A549 (cell line): ENCODE measurements at regions of chr2 and their contacts with region 1.

Region 1: DNA sequence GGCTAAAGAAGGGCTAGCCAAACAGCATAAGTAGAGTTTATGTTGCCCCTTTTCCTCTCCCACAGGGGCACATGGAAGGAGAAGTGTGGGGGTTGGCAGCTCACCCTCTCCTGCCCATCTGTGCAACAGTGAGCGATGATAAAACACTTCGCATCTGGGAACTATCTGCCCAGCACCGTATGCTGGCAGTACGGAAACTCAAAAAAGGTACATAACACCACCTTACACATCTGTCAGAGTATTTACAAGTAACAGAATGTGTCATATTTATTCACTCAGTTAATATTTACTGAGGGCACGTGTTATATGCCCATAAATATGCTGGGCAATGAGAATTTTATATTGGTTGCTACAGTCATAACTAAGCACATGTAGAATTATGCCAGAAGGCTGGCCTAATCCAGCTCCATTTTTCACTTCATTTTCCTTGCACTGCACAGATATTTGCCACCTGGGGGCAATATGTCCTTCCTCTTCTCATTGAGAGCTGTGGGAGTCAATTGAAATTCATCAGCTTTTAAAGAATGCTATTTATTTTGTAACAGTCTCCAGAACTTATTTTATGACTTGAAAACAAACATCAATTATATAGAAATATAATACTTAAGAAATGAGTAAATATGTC is 150.6 kb downstream of the RTN4 start:
- DNase-seq: peak; percentile 35 to 58
- ATAC-seq: peak in 1 of 2 experiments; percentile 55; a peak in 3 of 6 replicates
- H3K4me3 ChIP-seq: no peak overlapping the region
- H3K27ac ChIP-seq: no peak overlapping the region
- H3K4me1 ChIP-seq: peaks cover 17% of the 10 kb centered on the region
- CTCF ChIP-seq: peak; percentile 75
- EP300 ChIP-seq: no peak
- POLR2A ChIP-seq: no peak
- RAD21 ChIP-seq: peak; percentile 90 to 93

Region 2: GRCh38 chr2:54927085-54927750 is 27.5 kb after region 1 on chr2:
- CTCF ChIA-PET with region 1: interaction called, 12 read pairs
- POLR2A ChIA-PET with region 1: no interaction called
- DNase-seq: no peak
- ATAC-seq: no peak
- H3K4me3 ChIP-seq: no peak overlapping the region
- H3K27ac ChIP-seq: no peak overlapping the region
- H3K4me1 ChIP-seq: peaks cover 7% of the 10 kb centered on the region; the same call in 2 of the 3 replicates
- CTCF ChIP-seq: no peak
- EP300 ChIP-seq: no peak
- POLR2A ChIP-seq: no peak
- RAD21 ChIP-seq: no peak

Region 3: DNA sequence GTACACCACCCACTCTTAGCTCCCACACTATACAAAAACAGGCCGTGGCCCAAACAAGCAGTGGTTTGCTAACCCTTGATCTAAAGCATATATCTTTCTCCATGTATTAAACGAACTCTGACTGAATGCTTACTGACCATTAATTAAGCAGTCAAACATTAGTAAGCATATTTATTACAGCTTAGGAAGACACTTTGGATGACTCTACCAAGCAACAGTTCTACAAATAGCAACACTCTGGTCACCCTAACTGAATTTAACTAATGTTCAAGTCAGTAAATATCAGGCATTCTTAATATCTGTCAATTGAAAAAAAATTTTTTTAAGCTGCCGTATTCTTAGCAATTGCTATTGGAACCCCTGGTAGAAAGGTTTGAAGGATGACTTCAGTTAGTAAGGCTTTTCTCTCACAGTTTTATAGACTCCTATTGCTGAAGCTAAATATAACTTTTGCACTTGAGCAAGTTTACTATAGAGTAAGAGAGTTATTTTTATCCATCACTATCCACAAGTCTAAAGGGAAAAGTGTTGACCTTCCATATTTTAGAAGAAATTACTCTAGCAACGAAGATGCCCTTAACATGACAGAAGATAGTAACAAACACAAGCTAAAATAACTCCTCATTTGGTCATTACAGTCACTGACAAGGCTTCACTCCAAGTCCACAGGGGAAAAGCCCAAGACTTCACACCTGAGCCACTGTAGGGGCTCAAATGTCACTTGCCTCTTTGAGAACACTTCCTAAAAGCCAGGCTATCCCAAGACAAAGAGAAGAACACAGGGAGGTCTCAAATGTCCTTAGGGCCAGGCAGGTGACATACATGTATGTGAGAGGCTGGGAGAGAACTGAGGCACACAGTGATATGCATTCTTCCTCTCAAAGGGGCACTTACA is 76.2 kb after region 1 on chr2:
- CTCF ChIA-PET with region 1: interaction called, 13 read pairs
- POLR2A ChIA-PET with region 1: no interaction called
- DNase-seq: no peak
- ATAC-seq: peak in 1 of 2 experiments; percentile 17; a peak in 1 of 6 replicates
- H3K4me3 ChIP-seq: no peak overlapping the region
- H3K27ac ChIP-seq: no peak overlapping the region
- H3K4me1 ChIP-seq: peaks cover 19% of the 10 kb centered on the region; the same call in 1 of the 3 replicates
- CTCF ChIP-seq: no peak
- EP300 ChIP-seq: no peak
- POLR2A ChIP-seq: no peak
- RAD21 ChIP-seq: no peak

Region 4: GRCh38 chr2:55010149-55010591 is 110.5 kb after region 1 on chr2:
- CTCF ChIA-PET with region 1: interaction called, 25 read pairs
- POLR2A ChIA-PET with region 1: no interaction called
- DNase-seq: peak; percentile 26 to 67
- ATAC-seq: peak; percentile 76 to 81
- H3K4me3 ChIP-seq: peak overlapping the region; percentile 15; the same call in 2 of the 3 replicates
- H3K27ac ChIP-seq: peak overlapping the region; percentile 1 to 68; a peak in 4 of 6 replicates
- H3K4me1 ChIP-seq: peaks cover 94% of the 10 kb centered on the region
- CTCF ChIP-seq: no peak
- EP300 ChIP-seq: no peak
- POLR2A ChIP-seq: no peak
- RAD21 ChIP-seq: no peak

Region 5: GRCh38 chr2:55014962-55015939 is 115.6 kb after region 1 on chr2:
- CTCF ChIA-PET with region 1: interaction called, 25 read pairs
- POLR2A ChIA-PET with region 1: no interaction called
- DNase-seq: peak; percentile 71 to 89
- ATAC-seq: peak; percentile 83 to 88
- H3K4me3 ChIP-seq: no peak overlapping the region
- H3K27ac ChIP-seq: peak overlapping the region; percentile 3 to 32; a peak in 2 of 6 replicates
- H3K4me1 ChIP-seq: peaks cover 86% of the 10 kb centered on the region
- CTCF ChIP-seq: peak; percentile 93
- EP300 ChIP-seq: no peak
- POLR2A ChIP-seq: no peak
- RAD21 ChIP-seq: peak; percentile 91 to 95

Region 6: DNA sequence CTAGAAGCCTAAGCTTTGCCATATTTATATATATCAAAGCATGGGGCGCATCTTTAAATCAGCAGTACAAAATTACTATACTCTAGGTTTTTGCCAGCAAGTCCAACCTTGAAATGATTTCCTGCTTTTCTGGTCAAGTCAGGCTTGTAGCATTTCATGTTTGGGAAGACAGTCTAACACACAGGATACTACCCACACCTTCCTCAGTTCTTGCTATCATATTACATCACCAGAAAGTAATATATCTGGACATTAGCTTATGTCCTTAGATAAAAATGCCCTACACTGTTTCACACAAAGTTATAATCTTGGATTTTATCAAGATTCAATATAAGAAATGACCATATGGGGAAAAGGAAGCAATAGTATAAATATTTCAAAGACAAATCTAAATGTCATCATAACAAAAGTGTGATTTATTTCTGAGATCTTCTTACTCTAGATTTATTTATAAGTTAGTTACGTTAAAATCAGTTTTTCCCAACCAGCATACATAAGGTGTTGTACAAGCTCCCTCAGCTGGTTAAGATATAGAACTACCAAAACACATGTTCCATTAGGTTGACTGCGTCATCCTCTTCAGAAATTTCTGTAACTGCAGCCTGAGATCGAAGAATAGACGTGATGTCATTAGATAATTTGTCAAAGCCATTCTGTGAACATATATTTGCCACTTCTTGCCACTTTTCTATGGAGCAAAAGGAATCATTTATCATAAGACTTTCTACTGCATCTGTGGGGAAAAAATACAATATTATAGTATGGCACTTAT is 275.8 kb after region 1 on chr2:
- CTCF ChIA-PET with region 1: interaction called, 236 read pairs
- POLR2A ChIA-PET with region 1: no interaction called
- DNase-seq: peak; percentile 75 to 87
- ATAC-seq: peak; percentile 90 to 95
- H3K4me3 ChIP-seq: no peak overlapping the region
- H3K27ac ChIP-seq: no peak overlapping the region
- H3K4me1 ChIP-seq: peaks cover 4% of the 10 kb centered on the region; the same call in 1 of the 3 replicates
- CTCF ChIP-seq: peak; percentile 95
- EP300 ChIP-seq: no peak
- POLR2A ChIP-seq: no peak
- RAD21 ChIP-seq: peak; percentile 95 to 98

Region 7: DNA sequence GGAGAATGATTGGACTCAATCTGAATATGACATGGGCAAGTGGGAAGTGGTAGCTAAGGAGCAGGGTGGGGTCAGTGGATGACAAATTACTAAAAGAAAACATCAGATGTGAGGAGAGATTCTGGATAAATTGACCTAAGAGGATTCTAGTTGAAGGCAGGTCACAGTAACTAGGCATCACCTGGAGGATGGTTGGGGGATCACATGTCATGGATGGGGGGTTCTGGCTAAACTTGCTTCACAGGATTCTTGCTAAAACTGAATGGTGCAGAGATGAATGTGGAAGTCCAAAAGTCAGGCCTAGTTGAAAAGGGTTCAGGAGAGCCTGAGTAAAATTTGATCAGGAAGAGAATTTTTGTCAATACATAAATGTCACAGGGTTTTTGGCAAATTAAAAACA is 314.1 kb after region 1 on chr2:
- CTCF ChIA-PET with region 1: interaction called, 10 read pairs
- POLR2A ChIA-PET with region 1: no interaction called
- DNase-seq: no peak
- ATAC-seq: no peak
- H3K4me3 ChIP-seq: no peak overlapping the region
- H3K27ac ChIP-seq: no peak overlapping the region
- H3K4me1 ChIP-seq: no peaks in the 10 kb centered on the region
- CTCF ChIP-seq: no peak
- EP300 ChIP-seq: no peak
- POLR2A ChIP-seq: no peak
- RAD21 ChIP-seq: no peak